ENCODE measurements at regions of chr5 and their contacts with region 1.

Region 1: GRCh38 chr5:43680286-43680685 is 77.3 kb downstream of the NNT start:
- DNase-seq: no peak
- ATAC-seq: no peak
- H3K4me3 ChIP-seq: no peak overlapping the region
- H3K27ac ChIP-seq: no peak overlapping the region
- H3K4me1 ChIP-seq: peaks cover 2 to 9% of the 10 kb centered on the region in 2 donors
- H3K27me3 ChIP-seq: no peaks in the 10 kb centered on the region

Region 2: DNA sequence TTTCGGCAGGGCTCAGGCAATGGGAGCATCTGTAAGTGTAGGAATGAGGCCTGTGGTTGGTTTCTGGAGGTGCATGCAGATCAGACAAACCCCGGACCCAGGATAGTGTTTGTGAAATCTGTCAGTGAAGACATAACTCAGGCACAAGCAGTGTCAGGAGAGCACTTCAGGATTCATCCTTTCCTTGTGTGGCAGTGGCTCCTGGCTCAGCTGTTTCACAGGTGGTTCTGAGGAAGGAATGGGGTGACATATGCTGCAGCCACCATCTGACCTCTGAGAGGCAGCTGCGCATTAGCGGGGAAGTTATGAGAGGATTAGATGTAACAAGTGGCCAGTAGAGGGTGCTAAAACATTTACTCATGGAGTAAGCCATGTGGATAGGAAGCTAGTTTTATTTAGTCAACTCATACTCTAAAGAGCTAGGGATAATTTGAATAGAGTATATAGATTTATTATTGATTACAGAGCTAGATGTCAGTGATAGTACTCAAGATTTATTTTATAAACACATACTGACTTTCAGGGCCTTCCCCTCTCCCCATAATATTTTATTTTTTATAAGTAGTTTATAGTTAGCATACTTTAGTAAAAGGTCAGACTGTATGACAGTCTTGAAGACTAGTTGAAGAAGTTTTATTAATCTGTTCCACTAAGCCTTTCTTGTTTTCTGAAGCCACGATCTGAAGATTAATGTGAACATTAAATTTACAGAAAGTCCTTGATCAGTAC is 48.9 kb before region 1 on chr5:
- intact Hi-C with region 1: loop called (anchors 5 to 10 kb)
- DNase-seq: no peak
- ATAC-seq: peak; percentile 86
- H3K4me3 ChIP-seq: no peak overlapping the region
- H3K27ac ChIP-seq: no peak overlapping the region
- H3K4me1 ChIP-seq: peaks cover 4 to 6% of the 10 kb centered on the region in 2 donors
- H3K27me3 ChIP-seq: no peaks in the 10 kb centered on the region